Activated CD4-positive, alpha-beta memory T cell treated with anti-CD3 and anti-CD28 coated beads, Interleukin-2, amount 10 ng/mL, durations not matched to agents 7 days and 5 days (primary cell): ENCODE measurements at regions of chr9 and their contacts with region 1.

Region 1: GRCh38 chr9:120755827-120756434 is 37.3 kb downstream of the FBXW2 start:
- DNase-seq: peak; percentile 66
- H3K4me3 Mint-ChIP-seq: no peak overlapping the region
- H3K27ac Mint-ChIP-seq: no peak overlapping the region
- H3K4me1 Mint-ChIP-seq: peaks cover 10% of the 10 kb centered on the region
- H3K27me3 Mint-ChIP-seq: no peaks in the 10 kb centered on the region

Region 2: GRCh38 chr9:120705174-120705573 is 50.8 kb before region 1 on chr9:
- CTCF ChIA-PET with region 1: no interaction called
- POLR2A ChIA-PET with region 1: no interaction called
- DNase-seq: no peak
- H3K4me3 Mint-ChIP-seq: no peak overlapping the region
- H3K27ac Mint-ChIP-seq: no peak overlapping the region
- H3K4me1 Mint-ChIP-seq: peaks cover 9% of the 10 kb centered on the region
- H3K27me3 Mint-ChIP-seq: no peaks in the 10 kb centered on the region

Region 3: GRCh38 chr9:120767456-120768167 is 11.7 kb after region 1 on chr9:
- CTCF ChIA-PET with region 1: interaction called, 38 read pairs
- POLR2A ChIA-PET with region 1: interaction called, 3 read pairs
- DNase-seq: no peak
- H3K4me3 Mint-ChIP-seq: no peak overlapping the region
- H3K27ac Mint-ChIP-seq: no peak overlapping the region
- H3K4me1 Mint-ChIP-seq: peaks cover 56% of the 10 kb centered on the region
- H3K27me3 Mint-ChIP-seq: no peaks in the 10 kb centered on the region

Region 4: DNA sequence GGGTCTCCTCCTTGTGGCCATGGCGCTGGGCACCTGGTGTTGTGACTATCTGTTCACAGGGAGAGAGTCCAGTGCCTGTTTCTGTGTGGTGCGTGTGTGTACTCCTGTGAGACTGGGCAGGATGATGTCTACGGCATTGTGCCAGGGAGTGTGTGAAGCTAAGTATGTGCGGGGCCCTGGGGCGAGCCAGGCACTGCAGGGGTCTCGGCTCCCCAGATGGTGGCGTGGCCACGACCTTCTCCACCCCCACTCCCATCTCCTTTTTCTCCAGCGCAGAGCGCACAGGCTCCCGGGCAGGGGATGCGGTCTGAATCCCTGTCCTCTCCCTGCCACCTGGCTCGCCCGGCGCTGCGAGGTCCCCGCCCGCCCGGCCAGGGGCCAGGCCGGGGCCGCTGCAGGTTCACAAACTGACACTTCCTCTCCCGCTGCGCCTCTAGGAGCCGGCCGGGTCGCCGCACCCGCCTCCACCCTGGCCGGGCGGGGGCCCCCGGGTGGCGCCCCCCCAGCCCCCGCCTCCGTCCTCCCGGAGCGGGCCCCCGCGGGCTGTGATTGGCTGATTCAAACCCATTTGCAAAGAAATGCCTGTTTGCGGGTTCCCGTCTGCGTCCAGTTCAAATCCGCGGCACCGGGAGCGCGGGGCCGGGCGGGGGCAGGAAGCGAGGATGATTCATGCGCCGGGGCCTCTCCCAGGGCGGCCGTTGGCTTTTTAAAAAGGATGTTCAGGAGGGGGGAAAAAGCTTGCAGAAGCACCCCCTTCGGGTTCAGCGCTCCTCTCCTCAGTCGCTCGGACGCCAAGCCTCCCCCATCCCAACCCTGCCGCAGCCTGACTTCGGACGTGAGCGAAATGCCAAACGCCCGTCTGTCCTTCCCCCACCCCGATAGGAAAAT is 120.3 kb after region 1 on chr9:
- CTCF ChIA-PET with region 1: interaction called, 17 read pairs
- POLR2A ChIA-PET with region 1: no interaction called
- DNase-seq: peak; percentile 94
- H3K4me3 Mint-ChIP-seq: peak overlapping the region; percentile 94
- H3K27ac Mint-ChIP-seq: peak overlapping the region; percentile 98
- H3K4me1 Mint-ChIP-seq: peaks cover 76% of the 10 kb centered on the region
- H3K27me3 Mint-ChIP-seq: no peaks in the 10 kb centered on the region

Region 5: GRCh38 chr9:120971938-120972337 is 216.0 kb after region 1 on chr9:
- CTCF ChIA-PET with region 1: interaction called, 10 read pairs
- POLR2A ChIA-PET with region 1: no interaction called
- DNase-seq: no peak
- H3K4me3 Mint-ChIP-seq: no peak overlapping the region
- H3K27ac Mint-ChIP-seq: no peak overlapping the region
- H3K4me1 Mint-ChIP-seq: peaks cover 16% of the 10 kb centered on the region
- H3K27me3 Mint-ChIP-seq: peaks cover 2% of the 10 kb centered on the region

Region 6: GRCh38 chr9:120985810-120986222 is 229.9 kb after region 1 on chr9:
- CTCF ChIA-PET with region 1: interaction called, 17 read pairs
- POLR2A ChIA-PET with region 1: no interaction called
- DNase-seq: no peak
- H3K4me3 Mint-ChIP-seq: no peak overlapping the region
- H3K27ac Mint-ChIP-seq: no peak overlapping the region
- H3K4me1 Mint-ChIP-seq: peaks cover 2% of the 10 kb centered on the region
- H3K27me3 Mint-ChIP-seq: peaks cover 5% of the 10 kb centered on the region

Region 7: DNA sequence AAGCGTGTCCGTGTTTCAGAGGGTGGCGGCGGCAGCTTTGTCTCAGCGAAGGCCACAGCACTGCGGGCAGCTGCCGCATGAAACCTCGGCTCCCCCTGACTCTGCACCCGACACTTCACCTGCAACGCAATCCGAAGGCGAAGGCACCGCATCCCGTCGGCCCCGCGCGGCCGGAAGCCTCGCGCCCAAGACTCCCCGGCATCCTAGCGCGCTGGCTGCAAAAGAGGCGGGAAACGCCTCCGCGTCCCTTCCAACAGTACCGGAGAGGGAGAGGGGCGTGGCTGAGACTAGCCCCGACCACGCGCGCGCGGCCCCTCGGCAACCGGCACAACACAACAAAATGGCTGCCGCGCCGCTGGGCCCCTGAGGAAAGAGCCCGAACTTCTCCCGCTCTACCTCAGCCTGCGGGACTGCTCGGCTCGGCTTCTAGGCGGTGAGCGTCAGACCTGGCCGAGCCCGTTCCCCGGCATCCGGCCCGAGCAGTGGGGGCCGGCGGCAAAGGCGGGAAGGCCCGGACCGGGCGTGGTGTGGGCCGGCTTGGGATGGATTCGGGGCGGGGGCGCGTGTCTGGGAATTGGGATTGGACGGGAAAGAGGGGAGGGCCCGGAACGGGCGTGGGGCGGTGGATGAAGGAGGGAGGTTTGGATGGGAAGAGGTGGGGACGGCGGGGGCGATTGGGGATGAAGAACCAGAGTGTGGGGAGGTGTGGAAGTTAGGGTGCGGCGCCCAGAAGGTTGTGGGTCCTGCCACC is 318.9 kb after region 1 on chr9 and contains the start of gene CNTRL:
- CTCF ChIA-PET with region 1: interaction called, 19 read pairs
- POLR2A ChIA-PET with region 1: interaction called, 3 read pairs
- DNase-seq: peak; percentile 93
- H3K4me3 Mint-ChIP-seq: peak within 1 kb of the TSS; percentile 96
- H3K27ac Mint-ChIP-seq: peak within 1 kb of the TSS; percentile 91
- H3K4me1 Mint-ChIP-seq: peaks cover 53% of the 10 kb centered on the region
- H3K27me3 Mint-ChIP-seq: no peaks in the 10 kb centered on the region
- total RNA-seq, gene CNTRL: 84.1 to 86.9 TPM